B cell (primary cell): ENCODE measurements at regions of chr14 and their contacts with region 1.

Region 1: DNA sequence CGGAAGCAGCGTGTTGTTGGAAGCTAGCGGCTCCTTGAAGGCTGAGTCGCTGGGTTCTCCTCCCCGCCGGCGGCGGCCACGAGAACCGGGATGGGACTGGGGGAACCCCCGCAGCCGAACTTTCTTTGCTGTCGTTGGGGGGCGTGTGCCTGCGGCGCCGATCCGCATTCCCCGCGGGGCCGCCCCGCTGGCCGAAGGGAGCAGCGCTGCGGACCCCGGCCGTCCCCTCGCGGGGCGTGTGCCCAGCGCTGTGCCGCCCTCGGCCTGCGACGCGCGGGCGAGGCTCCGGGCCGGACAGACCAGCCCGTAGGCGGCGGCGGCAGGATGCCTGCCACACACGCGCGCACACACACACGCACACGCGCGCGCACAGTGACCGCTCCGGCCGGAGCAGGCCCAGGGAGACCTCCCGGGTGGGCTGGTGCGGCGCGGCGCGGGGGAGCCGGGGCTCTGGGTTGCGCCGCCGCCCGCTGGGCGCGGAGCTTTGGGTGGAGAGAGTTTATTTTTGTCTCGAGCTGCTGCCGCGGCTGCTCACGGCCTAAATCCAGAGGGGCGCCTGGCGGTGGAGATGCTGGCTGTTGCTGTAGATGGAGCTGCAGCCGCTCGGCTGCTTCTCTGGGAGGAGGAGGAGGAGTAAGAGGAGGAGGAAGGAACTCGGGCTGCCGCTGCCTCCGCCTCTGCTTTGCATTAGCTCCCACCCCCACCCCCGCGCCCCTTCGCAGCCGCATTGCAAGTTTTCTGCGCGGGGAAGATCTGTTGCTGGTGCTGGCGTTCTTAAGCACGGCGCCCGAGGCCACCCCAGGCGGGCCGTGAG is at the start of gene SAMD4A:
- DNase-seq: peak; percentile 85
- ATAC-seq: peak; percentile 35
- H3K4me3 ChIP-seq: peak within 1 kb of the TSS; percentile 52 to 86 (median 73)
- H3K4me3 Mint-ChIP-seq: peak within 1 kb of the TSS; percentile 96
- H3K27ac ChIP-seq: peak within 1 kb of the TSS; percentile 73 to 85
- H3K27ac Mint-ChIP-seq: peak within 1 kb of the TSS; percentile 96
- H3K4me1 ChIP-seq: peaks cover 21 to 24% of the 10 kb centered on the region in 2 donors
- H3K4me1 Mint-ChIP-seq: peaks cover 27% of the 10 kb centered on the region
- H3K27me3 ChIP-seq: no peaks in the 10 kb centered on the region
- H3K27me3 Mint-ChIP-seq: peaks cover 3% of the 10 kb centered on the region
- CTCF ChIP-seq: peak; percentile 10
- total RNA-seq, gene SAMD4A: 12.7 and 13.7 TPM in 2 replicates

Region 2: DNA sequence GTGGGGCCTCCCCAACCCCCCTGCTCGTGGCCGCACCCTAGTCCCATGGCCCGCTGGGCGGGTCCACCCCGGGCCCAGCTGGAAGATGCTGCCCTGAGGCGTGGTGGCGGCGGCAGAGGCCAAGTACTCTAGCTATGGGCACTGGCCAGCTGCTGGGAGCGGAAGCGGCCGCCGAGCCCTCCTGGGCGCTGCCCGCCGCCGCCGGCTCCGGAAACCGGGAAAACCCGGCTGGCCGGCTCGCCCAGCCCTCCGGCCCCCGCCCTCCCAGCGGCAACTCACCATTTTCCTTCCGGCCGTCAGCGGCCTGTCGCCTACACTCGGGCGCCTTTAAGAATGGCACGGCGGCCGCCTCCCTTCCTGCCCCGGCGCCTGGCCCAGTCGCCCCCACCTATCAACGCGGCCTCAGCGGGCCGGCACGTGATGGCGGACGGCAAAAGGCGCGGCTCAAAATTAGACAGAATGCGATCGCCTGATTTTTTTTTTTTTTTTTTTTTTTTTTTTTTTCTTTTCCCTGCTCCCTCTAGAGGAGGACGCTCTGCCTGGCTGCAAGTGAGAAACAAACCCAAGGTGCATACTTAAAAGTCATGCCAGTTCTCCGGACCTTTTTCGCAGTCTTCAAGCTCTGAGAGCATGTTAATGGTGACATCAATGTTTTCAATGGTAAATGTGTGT is 77.8 kb before region 1 on chr14 and contains the start of gene GMFB:
- CTCF ChIA-PET with region 1: interaction called, 4 read pairs
- POLR2A ChIA-PET with region 1: no interaction called
- intact Hi-C with region 1: loop called (anchors 2 kb)
- DNase-seq: peak; percentile 92
- ATAC-seq: peak; percentile 96
- H3K4me3 ChIP-seq: peak within 1 kb of the TSS; percentile 69 to 97 (median 83)
- H3K4me3 Mint-ChIP-seq: peak within 1 kb of the TSS; percentile 97
- H3K27ac ChIP-seq: peak within 1 kb of the TSS; percentile 82 to 97
- H3K27ac Mint-ChIP-seq: peak within 1 kb of the TSS; percentile 98
- H3K4me1 ChIP-seq: peaks cover 41 to 52% of the 10 kb centered on the region in 2 donors
- H3K4me1 Mint-ChIP-seq: peaks cover 57% of the 10 kb centered on the region
- H3K27me3 ChIP-seq: no peaks in the 10 kb centered on the region
- H3K27me3 Mint-ChIP-seq: no peaks in the 10 kb centered on the region
- CTCF ChIP-seq: no peak
- total RNA-seq, gene GMFB: 42.6 and 49.8 TPM in 2 replicates

Region 3: DNA sequence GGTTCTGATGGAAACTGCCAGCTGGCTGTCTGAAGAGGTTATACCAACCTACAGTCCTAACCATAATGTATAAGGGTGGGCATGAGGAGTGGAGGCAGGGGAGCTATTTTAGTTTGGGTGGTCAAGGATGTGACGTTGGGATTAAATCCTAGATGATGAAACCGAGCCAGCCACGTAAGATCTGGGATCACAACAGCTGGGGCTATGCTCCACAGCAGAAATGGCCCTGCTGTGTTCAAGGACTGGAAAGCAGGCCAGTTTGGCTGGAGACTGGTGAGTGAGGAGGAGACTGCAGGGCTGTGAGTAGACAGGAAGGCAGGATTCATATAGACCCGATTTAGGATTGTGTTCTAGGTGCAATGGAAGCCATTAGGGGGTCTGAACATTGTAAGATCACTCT is 66.5 kb after region 1 on chr14:
- CTCF ChIA-PET with region 1: interaction called, 13 read pairs
- POLR2A ChIA-PET with region 1: interaction called, 5 read pairs
- intact Hi-C with region 1: loop called (anchors 5 kb)
- DNase-seq: no peak
- ATAC-seq: no peak
- H3K4me3 ChIP-seq: no peak overlapping the region
- H3K4me3 Mint-ChIP-seq: no peak overlapping the region
- H3K27ac ChIP-seq: no peak overlapping the region
- H3K27ac Mint-ChIP-seq: no peak overlapping the region
- H3K4me1 ChIP-seq: peaks cover 22 to 25% of the 10 kb centered on the region in 2 donors
- H3K4me1 Mint-ChIP-seq: peaks cover 25% of the 10 kb centered on the region
- H3K27me3 ChIP-seq: no peaks in the 10 kb centered on the region
- H3K27me3 Mint-ChIP-seq: no peaks in the 10 kb centered on the region
- CTCF ChIP-seq: no peak

Region 4: GRCh38 chr14:54722781-54723432 is 156.3 kb after region 1 on chr14:
- CTCF ChIA-PET with region 1: interaction called, 82 read pairs
- POLR2A ChIA-PET with region 1: no interaction called
- intact Hi-C with region 1: loop called (anchors 2 kb)
- DNase-seq: peak; percentile 63
- ATAC-seq: peak; percentile 58
- H3K4me3 ChIP-seq: no peak overlapping the region
- H3K4me3 Mint-ChIP-seq: peak overlapping the region; percentile 6
- H3K27ac ChIP-seq: no peak overlapping the region
- H3K27ac Mint-ChIP-seq: peak overlapping the region; percentile 44
- H3K4me1 ChIP-seq: peaks cover 0 to 3% of the 10 kb centered on the region in 2 donors
- H3K4me1 Mint-ChIP-seq: peaks cover 8% of the 10 kb centered on the region
- H3K27me3 ChIP-seq: no peaks in the 10 kb centered on the region
- H3K27me3 Mint-ChIP-seq: no peaks in the 10 kb centered on the region
- CTCF ChIP-seq: peak; percentile 44

Region 5: GRCh38 chr14:54782751-54783679 is 216.4 kb after region 1 on chr14:
- CTCF ChIA-PET with region 1: interaction called, 231 read pairs
- POLR2A ChIA-PET with region 1: no interaction called
- intact Hi-C with region 1: no loop called
- DNase-seq: peak; percentile 76
- ATAC-seq: peak; percentile 83
- H3K4me3 ChIP-seq: no peak overlapping the region
- H3K4me3 Mint-ChIP-seq: peak overlapping the region; percentile 23
- H3K27ac ChIP-seq: no peak overlapping the region
- H3K27ac Mint-ChIP-seq: peak overlapping the region; percentile 1
- H3K4me1 ChIP-seq: peaks cover 14 to 21% of the 10 kb centered on the region in 2 donors
- H3K4me1 Mint-ChIP-seq: peaks cover 28% of the 10 kb centered on the region
- H3K27me3 ChIP-seq: no peaks in the 10 kb centered on the region
- H3K27me3 Mint-ChIP-seq: no peaks in the 10 kb centered on the region
- CTCF ChIP-seq: peak; percentile 38

Region 6: DNA sequence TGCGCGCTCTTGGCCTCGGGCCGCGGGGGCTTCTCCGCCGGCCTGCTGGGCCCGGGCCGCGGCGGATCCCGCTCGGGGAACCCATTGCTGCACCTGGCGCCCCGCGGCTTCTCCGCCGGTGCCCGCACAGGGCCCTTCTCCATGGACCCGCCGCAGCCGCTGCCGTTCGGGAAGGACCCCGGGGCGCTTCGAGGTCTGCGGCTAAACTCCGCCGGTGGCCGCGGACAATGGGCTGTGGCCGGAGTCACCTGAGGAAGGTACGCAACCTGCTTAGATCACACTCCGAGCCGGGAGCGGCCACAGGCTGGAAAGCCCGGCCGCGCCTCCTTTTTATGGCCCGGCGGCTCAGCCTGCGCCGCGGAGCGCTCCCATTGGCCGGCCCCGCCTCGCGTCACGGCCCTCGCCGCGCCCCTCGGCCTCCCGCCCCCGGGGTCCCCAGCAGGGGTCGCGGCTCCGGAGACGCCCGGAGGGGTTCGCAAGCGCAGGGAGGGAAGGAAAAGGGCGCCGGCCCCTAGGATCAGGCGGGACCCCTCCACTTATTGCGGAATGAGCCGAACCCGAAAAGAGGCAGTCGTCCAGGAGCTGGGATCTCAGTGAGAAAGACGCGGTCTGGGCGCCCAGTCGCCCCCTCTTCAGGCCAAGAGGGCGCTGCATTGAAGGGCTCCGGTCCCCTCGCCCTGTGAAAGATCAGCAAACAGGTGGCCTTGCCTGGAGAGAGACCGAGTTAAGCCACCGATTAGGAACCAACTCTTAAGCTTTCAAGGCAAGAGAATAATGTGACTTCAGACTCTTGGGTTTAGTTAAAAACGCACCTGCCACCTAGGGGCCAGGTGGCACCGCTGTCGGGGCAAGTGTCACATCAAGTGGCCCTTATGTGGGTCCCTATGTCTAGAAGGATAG is 336.2 kb after region 1 on chr14 and contains the start of gene GCH1:
- CTCF ChIA-PET with region 1: interaction called, 7 read pairs
- POLR2A ChIA-PET with region 1: no interaction called
- intact Hi-C with region 1: loop called (anchors 1 kb)
- DNase-seq: peak; percentile 92
- ATAC-seq: peak; percentile 87
- H3K4me3 ChIP-seq: peak within 1 kb of the TSS; percentile 50 to 92 (median 83)
- H3K4me3 Mint-ChIP-seq: peak within 1 kb of the TSS; percentile 91
- H3K27ac ChIP-seq: peak within 1 kb of the TSS; percentile 83 to 90
- H3K27ac Mint-ChIP-seq: peak within 1 kb of the TSS; percentile 92
- H3K4me1 ChIP-seq: peaks cover 9 to 16% of the 10 kb centered on the region in 2 donors
- H3K4me1 Mint-ChIP-seq: peaks cover 18% of the 10 kb centered on the region
- H3K27me3 ChIP-seq: no peaks in the 10 kb centered on the region
- H3K27me3 Mint-ChIP-seq: no peaks in the 10 kb centered on the region
- CTCF ChIP-seq: peak; percentile 85
- total RNA-seq, gene GCH1: 23.7 and 24.6 TPM in 2 replicates

Region 7: GRCh38 chr14:55191203-55192053 is 624.8 kb after region 1 on chr14 and contains the start of gene DLGAP5:
- CTCF ChIA-PET with region 1: no interaction called
- POLR2A ChIA-PET with region 1: no interaction called
- intact Hi-C with region 1: loop called (anchors 1 kb)
- DNase-seq: peak; percentile 91
- ATAC-seq: peak; percentile 98
- H3K4me3 ChIP-seq: peak within 1 kb of the TSS; percentile 38 to 72 (median 68)
- H3K4me3 Mint-ChIP-seq: peak within 1 kb of the TSS; percentile 89
- H3K27ac ChIP-seq: peak within 1 kb of the TSS in 1 of 2 donors; percentile 68
- H3K27ac Mint-ChIP-seq: peak within 1 kb of the TSS; percentile 42
- H3K4me1 ChIP-seq: peaks cover 9 to 13% of the 10 kb centered on the region in 2 donors
- H3K4me1 Mint-ChIP-seq: peaks cover 14% of the 10 kb centered on the region
- H3K27me3 ChIP-seq: no peaks in the 10 kb centered on the region
- H3K27me3 Mint-ChIP-seq: no peaks in the 10 kb centered on the region
- CTCF ChIP-seq: no peak
- total RNA-seq, gene DLGAP5: not detected in 2 replicates